CD4-positive, alpha-beta memory T cell (primary cell): ENCODE measurements at regions of chr5 and their contacts with region 1.

Region 1: GRCh38 chr5:134113902-134114875 is at the start of gene TCF7:
- DNase-seq: peak; percentile 78 to 83 (median 81)
- H3K4me3 ChIP-seq: peak within 1 kb of the TSS; percentile 92 to 97
- H3K4me3 Mint-ChIP-seq: peak within 1 kb of the TSS; percentile 96 to 99 (median 97)
- H3K27ac ChIP-seq: peak within 1 kb of the TSS; percentile 97
- H3K27ac Mint-ChIP-seq: peak within 1 kb of the TSS; percentile 94 to 98 (median 97)
- H3K4me1 ChIP-seq: peaks cover 68% of the 10 kb centered on the region
- H3K4me1 Mint-ChIP-seq: peaks cover 38 to 80% (median 53%) of the 10 kb centered on the region in 4 donors
- H3K27me3 ChIP-seq: no peaks in the 10 kb centered on the region
- H3K27me3 Mint-ChIP-seq: no peaks in the 10 kb centered on the region
- total RNA-seq, gene TCF7: 770 to 841 TPM

Region 2: GRCh38 chr5:134053840-134054338 is 60.3 kb before region 1 on chr5:
- CTCF ChIA-PET with region 1: no interaction called
- POLR2A ChIA-PET with region 1: interaction called, 27 read pairs
- intact Hi-C with region 1: no loop called
- DNase-seq: peak in 4 of 5 donors; percentile 22 to 30 (median 26)
- H3K4me3 ChIP-seq: no peak overlapping the region
- H3K4me3 Mint-ChIP-seq: peak overlapping the region; percentile 29 to 80 (median 73)
- H3K27ac ChIP-seq: no peak overlapping the region
- H3K27ac Mint-ChIP-seq: peak overlapping the region; percentile 65 to 87 (median 73)
- H3K4me1 ChIP-seq: peaks cover 32% of the 10 kb centered on the region
- H3K4me1 Mint-ChIP-seq: peaks cover 16 to 44% (median 34%) of the 10 kb centered on the region in 4 donors
- H3K27me3 ChIP-seq: no peaks in the 10 kb centered on the region
- H3K27me3 Mint-ChIP-seq: no peaks in the 10 kb centered on the region

Region 3: GRCh38 chr5:134086943-134087305 is 27.3 kb before region 1 on chr5:
- CTCF ChIA-PET with region 1: no interaction called
- POLR2A ChIA-PET with region 1: no interaction called
- intact Hi-C with region 1: loop called (anchors 1 kb)
- DNase-seq: peak; percentile 82 to 92 (median 89)
- H3K4me3 ChIP-seq: peak overlapping the region in 1 of 2 donors; percentile 12
- H3K4me3 Mint-ChIP-seq: peak overlapping the region; percentile 68 to 88 (median 76)
- H3K27ac ChIP-seq: peak overlapping the region; percentile 52
- H3K27ac Mint-ChIP-seq: peak overlapping the region; percentile 94 to 99 (median 97)
- H3K4me1 ChIP-seq: peaks cover 98% of the 10 kb centered on the region
- H3K4me1 Mint-ChIP-seq: peaks cover 61 to 94% (median 78%) of the 10 kb centered on the region in 4 donors
- H3K27me3 ChIP-seq: no peaks in the 10 kb centered on the region
- H3K27me3 Mint-ChIP-seq: no peaks in the 10 kb centered on the region

Region 4: GRCh38 chr5:134101686-134102439 is 12.3 kb before region 1 on chr5:
- CTCF ChIA-PET with region 1: no interaction called
- POLR2A ChIA-PET with region 1: no interaction called
- intact Hi-C with region 1: loop called (anchors 2 kb)
- DNase-seq: peak; percentile 62 to 77 (median 73)
- H3K4me3 ChIP-seq: no peak overlapping the region
- H3K4me3 Mint-ChIP-seq: peak overlapping the region in 6 of 8 donors; percentile 10 to 62 (median 36)
- H3K27ac ChIP-seq: peak overlapping the region; percentile 85
- H3K27ac Mint-ChIP-seq: peak overlapping the region; percentile 59 to 96 (median 88)
- H3K4me1 ChIP-seq: peaks cover 95% of the 10 kb centered on the region
- H3K4me1 Mint-ChIP-seq: peaks cover 62 to 98% (median 82%) of the 10 kb centered on the region in 4 donors
- H3K27me3 ChIP-seq: no peaks in the 10 kb centered on the region
- H3K27me3 Mint-ChIP-seq: no peaks in the 10 kb centered on the region

Region 5: GRCh38 chr5:134125039-134126015 is 11.1 kb after region 1 on chr5:
- CTCF ChIA-PET with region 1: no interaction called
- POLR2A ChIA-PET with region 1: no interaction called
- intact Hi-C with region 1: loop called (anchors 1 kb)
- DNase-seq: no peak
- H3K4me3 ChIP-seq: peak overlapping the region; percentile 36 to 63
- H3K4me3 Mint-ChIP-seq: peak overlapping the region; percentile 86 to 99 (median 96)
- H3K27ac ChIP-seq: peak overlapping the region; percentile 97
- H3K27ac Mint-ChIP-seq: peak overlapping the region; percentile 95 to 99 (median 98)
- H3K4me1 ChIP-seq: peaks cover 100% of the 10 kb centered on the region
- H3K4me1 Mint-ChIP-seq: peaks cover 44 to 99% (median 77%) of the 10 kb centered on the region in 4 donors
- H3K27me3 ChIP-seq: no peaks in the 10 kb centered on the region
- H3K27me3 Mint-ChIP-seq: no peaks in the 10 kb centered on the region

Region 6: DNA sequence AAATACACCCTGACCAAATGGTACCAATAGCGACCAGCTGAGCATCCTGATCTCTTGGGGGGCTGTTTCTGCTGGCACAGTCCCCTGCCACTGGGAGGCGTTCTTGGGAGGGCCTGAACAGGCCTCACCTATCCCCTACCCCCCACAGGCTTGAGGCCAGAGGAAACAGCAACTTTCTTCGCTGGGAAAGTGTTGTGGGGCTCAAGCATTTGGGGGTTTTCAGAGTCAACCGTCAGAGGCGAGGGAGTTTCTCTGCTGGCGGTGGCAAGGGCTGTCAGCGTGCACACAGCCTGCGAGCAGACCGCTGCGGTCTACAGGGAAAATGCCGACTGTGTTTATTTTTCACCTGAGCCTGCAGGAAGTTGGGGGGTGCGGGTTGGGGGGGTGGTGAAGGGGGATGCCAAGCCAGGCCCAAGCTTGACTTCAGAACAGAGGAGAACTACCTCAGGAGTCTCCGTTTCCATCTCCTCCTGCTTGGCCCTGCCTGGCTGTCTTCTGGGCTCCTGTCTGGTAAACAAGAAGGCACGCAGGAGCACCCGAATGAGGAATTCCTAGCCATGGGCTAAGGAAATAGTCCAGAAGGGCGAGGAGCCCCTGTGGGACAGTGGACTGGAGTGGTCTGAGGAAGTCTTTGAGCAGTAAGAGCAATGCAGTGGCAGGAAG is 18.3 kb after region 1 on chr5:
- CTCF ChIA-PET with region 1: no interaction called
- POLR2A ChIA-PET with region 1: no interaction called
- intact Hi-C with region 1: loop called (anchors 1 kb)
- DNase-seq: peak; percentile 86 to 97 (median 88)
- H3K4me3 ChIP-seq: peak overlapping the region; percentile 43 to 68
- H3K4me3 Mint-ChIP-seq: peak overlapping the region; percentile 86 to 99 (median 96)
- H3K27ac ChIP-seq: peak overlapping the region; percentile 97
- H3K27ac Mint-ChIP-seq: peak overlapping the region; percentile 95 to 99 (median 98)
- H3K4me1 ChIP-seq: peaks cover 100% of the 10 kb centered on the region
- H3K4me1 Mint-ChIP-seq: peaks cover 65 to 100% (median 85%) of the 10 kb centered on the region in 4 donors
- H3K27me3 ChIP-seq: no peaks in the 10 kb centered on the region
- H3K27me3 Mint-ChIP-seq: no peaks in the 10 kb centered on the region

Region 7: DNA sequence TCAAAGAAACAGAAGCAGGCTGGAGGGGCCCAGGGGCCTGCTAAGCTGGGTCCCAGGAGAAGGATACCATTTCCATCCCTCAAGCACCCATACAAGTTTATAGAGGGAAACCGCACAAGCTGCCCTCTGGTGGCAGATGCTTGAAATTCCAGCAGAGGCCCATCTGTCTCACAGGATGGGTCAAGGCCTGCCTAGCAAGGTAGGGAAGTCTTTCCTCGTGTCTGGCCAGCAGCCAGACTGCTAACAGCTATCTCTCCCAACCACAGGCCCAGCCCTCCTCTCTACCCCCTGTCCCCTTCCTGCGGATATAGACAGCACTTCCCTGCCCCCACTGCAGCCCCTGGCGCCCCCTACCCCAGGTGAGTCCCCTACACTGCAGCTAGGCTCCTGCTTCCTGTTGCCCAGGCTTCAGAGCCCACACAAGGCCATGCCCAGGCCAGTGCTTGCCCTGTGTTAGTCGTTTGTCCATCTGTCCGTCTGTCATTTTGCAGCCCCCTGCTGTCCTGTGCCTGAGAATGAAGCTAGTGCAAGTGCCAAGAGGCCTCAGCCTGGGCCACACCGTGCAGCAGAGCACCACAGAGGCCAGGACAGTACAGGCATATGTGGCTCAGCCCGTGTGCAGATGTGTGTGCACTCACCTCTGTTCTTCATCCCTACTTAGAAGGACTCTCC is 26.5 kb after region 1 on chr5:
- CTCF ChIA-PET with region 1: no interaction called
- POLR2A ChIA-PET with region 1: no interaction called
- intact Hi-C with region 1: loop called (anchors 1 kb)
- DNase-seq: peak; percentile 52 to 70 (median 57)
- H3K4me3 ChIP-seq: no peak overlapping the region
- H3K4me3 Mint-ChIP-seq: peak overlapping the region in 2 of 8 donors; percentile 20 to 24
- H3K27ac ChIP-seq: peak overlapping the region; percentile 97
- H3K27ac Mint-ChIP-seq: peak overlapping the region; percentile 64 to 98 (median 86)
- H3K4me1 ChIP-seq: peaks cover 59% of the 10 kb centered on the region
- H3K4me1 Mint-ChIP-seq: peaks cover 24 to 84% (median 59%) of the 10 kb centered on the region in 4 donors
- H3K27me3 ChIP-seq: no peaks in the 10 kb centered on the region
- H3K27me3 Mint-ChIP-seq: no peaks in the 10 kb centered on the region